Heart right ventricle (tissue), 16 donors: ENCODE measurements at regions of chr6 and their contacts with region 1.

Region 1: GRCh38 chr6:129130959-129131681 is 248.2 kb downstream of the LAMA2 start:
- DNase-seq: peak in 1 of 2 donors; percentile 20
- ATAC-seq: peak; percentile 27 to 78 (median 69)
- H3K4me3 ChIP-seq: no peak overlapping the region
- H3K27ac ChIP-seq: peak overlapping the region; percentile 16 to 86 (median 70)
- H3K4me1 ChIP-seq: peaks cover 8 to 68% (median 57%) of the 10 kb centered on the region in 9 donors
- H3K27me3 ChIP-seq: no peaks in the 10 kb centered on the region
- CTCF ChIP-seq: no peak

Region 2: GRCh38 chr6:129096651-129097290 is 34.3 kb before region 1 on chr6:
- intact Hi-C with region 1: loop called in 2 of 10 experiments (anchors 5 kb)
- DNase-seq: no peak
- ATAC-seq: peak; percentile 50 to 91 (median 82)
- H3K4me3 ChIP-seq: no peak overlapping the region
- H3K27ac ChIP-seq: peak overlapping the region in 3 of 10 donors; percentile 23 to 62 (median 39)
- H3K4me1 ChIP-seq: peaks cover 0 to 72% (median 30%) of the 10 kb centered on the region in 9 donors
- H3K27me3 ChIP-seq: no peaks in the 10 kb centered on the region
- CTCF ChIP-seq: no peak

Region 3: DNA sequence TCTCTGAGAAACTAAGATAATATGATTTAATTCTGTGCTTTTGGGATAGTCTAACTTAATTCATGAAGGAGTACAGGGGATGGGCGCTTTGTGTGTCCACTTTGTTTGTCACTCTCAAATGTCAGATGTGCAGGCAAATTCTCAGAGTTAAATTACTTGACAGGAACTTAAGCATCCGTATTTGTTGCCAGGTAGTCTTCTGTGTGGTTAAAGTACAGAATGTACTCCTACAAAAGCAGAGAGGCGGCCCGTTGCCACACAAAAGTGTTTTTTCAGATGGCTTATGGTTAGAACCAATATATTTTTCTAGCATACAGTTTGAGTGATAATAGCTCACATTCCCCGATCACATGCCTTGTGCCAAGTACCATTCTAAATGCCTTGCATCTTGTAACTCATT is 13.8 kb before region 1 on chr6:
- intact Hi-C with region 1: loop called in 1 of 10 experiments (anchors 2 kb)
- DNase-seq: no peak
- ATAC-seq: no peak
- H3K4me3 ChIP-seq: no peak overlapping the region
- H3K27ac ChIP-seq: peak overlapping the region in 3 of 10 donors; percentile 1 to 17 (median 9)
- H3K4me1 ChIP-seq: peaks cover 3 to 71% (median 49%) of the 10 kb centered on the region in 9 donors
- H3K27me3 ChIP-seq: no peaks in the 10 kb centered on the region
- CTCF ChIP-seq: no peak